B cell (primary cell): ENCODE measurements at regions of chr4 and their contacts with region 1.

Region 1: GRCh38 chr4:174365018-174365587 is 81.4 kb downstream of the CEP44 start:
- DNase-seq: peak; percentile 12
- ATAC-seq: no peak
- H3K4me3 ChIP-seq: no peak overlapping the region
- H3K4me3 Mint-ChIP-seq: no peak overlapping the region
- H3K27ac ChIP-seq: no peak overlapping the region
- H3K27ac Mint-ChIP-seq: no peak overlapping the region
- H3K4me1 ChIP-seq: no peaks in the 10 kb centered on the region
- H3K4me1 Mint-ChIP-seq: no peaks in the 10 kb centered on the region
- H3K27me3 ChIP-seq: no peaks in the 10 kb centered on the region
- H3K27me3 Mint-ChIP-seq: no peaks in the 10 kb centered on the region
- CTCF ChIP-seq: peak; percentile 70

Region 2: DNA sequence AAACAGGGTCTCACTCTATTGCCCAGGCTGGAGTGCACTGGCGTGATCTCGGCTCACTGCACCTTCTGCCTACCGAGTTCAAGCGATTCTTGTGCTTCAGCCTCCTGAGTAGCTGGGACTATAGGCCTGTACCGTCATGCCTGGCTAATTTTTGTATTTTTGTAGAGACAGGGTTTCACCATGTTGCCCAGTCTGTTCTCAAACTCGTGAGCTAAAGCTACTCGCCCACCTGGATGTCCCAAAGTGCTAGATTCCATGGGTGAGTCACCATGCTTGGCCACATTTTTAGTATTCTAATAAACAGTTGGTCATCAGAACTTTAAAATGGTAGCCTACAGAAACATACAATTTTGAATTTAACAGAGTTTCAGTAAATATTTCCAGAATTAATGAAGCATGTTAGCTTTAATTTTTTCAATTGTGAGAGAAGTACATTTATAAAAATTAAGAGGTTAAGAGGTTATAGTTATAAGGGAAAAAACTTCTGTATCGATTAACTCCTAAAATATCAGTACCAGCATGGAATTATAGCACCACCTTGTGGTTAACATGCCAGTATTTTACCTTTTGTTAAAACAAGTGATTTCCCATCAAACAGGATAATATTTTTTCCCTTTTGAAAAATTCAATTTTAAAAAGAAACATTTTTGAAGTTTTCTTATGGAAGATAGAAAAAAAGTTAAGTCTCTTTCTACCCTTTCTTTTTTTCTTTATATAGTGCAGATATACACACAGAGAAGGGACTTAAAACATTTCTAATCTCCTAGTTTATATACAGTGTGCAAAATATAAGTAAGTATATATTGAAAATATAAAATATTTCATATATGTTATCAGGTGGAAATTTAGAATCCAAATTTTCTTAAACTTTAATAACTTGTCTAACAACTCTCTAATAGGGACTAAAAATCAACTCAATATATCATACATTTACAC is 46.0 kb before region 1 on chr4:
- CTCF ChIA-PET with region 1: no interaction called
- POLR2A ChIA-PET with region 1: no interaction called
- intact Hi-C with region 1: no loop called
- DNase-seq: peak; percentile 38
- ATAC-seq: no peak
- H3K4me3 ChIP-seq: no peak overlapping the region
- H3K4me3 Mint-ChIP-seq: no peak overlapping the region
- H3K27ac ChIP-seq: no peak overlapping the region
- H3K27ac Mint-ChIP-seq: no peak overlapping the region
- H3K4me1 ChIP-seq: no peaks in the 10 kb centered on the region
- H3K4me1 Mint-ChIP-seq: no peaks in the 10 kb centered on the region
- H3K27me3 ChIP-seq: no peaks in the 10 kb centered on the region
- H3K27me3 Mint-ChIP-seq: no peaks in the 10 kb centered on the region
- CTCF ChIP-seq: peak; percentile 83

Region 3: GRCh38 chr4:174631901-174632758 is 267.0 kb after region 1 on chr4:
- CTCF ChIA-PET with region 1: no interaction called
- POLR2A ChIA-PET with region 1: no interaction called
- intact Hi-C with region 1: loop called (anchors 2 kb)
- DNase-seq: peak; percentile 5
- ATAC-seq: no peak
- H3K4me3 ChIP-seq: no peak overlapping the region
- H3K4me3 Mint-ChIP-seq: no peak overlapping the region
- H3K27ac ChIP-seq: no peak overlapping the region
- H3K27ac Mint-ChIP-seq: no peak overlapping the region
- H3K4me1 ChIP-seq: no peaks in the 10 kb centered on the region
- H3K4me1 Mint-ChIP-seq: no peaks in the 10 kb centered on the region
- H3K27me3 ChIP-seq: no peaks in the 10 kb centered on the region
- H3K27me3 Mint-ChIP-seq: peaks cover 5% of the 10 kb centered on the region
- CTCF ChIP-seq: peak; percentile 37

Region 4: DNA sequence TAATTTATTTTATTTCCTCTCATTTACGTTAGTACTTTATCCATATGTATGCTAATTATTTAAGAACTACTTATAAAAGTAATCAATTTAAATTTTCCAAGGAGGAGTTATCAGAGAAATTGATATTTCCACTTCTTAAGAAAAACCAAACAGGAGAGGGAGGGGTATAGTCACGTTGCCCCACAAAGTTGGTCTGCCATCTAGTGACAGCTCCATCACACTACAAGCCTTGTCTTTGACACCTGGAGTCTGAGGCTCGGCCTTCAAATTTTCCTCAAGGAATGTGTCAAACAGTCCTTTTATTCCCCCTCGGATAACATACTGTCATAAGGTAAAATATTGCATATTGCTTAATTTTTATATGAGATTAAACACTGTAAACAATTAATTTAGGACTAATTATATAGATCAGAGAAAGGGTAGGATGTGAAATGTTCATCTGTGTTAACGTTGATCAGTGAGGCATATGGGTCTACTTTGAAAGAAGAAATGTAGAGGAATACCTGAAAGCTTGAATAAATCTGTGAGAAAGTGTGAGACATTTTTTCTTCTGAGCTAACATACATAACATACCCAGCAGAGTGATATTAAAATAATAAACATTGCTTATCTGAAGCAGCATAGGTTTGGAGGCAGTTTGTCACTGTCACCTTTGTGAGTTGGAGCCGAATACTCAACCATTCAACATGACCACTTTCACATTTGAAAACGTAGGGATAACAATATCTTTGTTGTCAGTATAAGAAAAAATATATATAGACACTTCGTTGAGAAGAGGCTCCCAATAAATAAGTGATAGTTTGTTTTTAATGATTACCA is 349.5 kb after region 1 on chr4:
- CTCF ChIA-PET with region 1: no interaction called
- POLR2A ChIA-PET with region 1: no interaction called
- intact Hi-C with region 1: loop called (anchors 5 kb)
- DNase-seq: peak; percentile 5
- ATAC-seq: no peak
- H3K4me3 ChIP-seq: no peak overlapping the region
- H3K4me3 Mint-ChIP-seq: no peak overlapping the region
- H3K27ac ChIP-seq: no peak overlapping the region
- H3K27ac Mint-ChIP-seq: no peak overlapping the region
- H3K4me1 ChIP-seq: no peaks in the 10 kb centered on the region
- H3K4me1 Mint-ChIP-seq: no peaks in the 10 kb centered on the region
- H3K27me3 ChIP-seq: no peaks in the 10 kb centered on the region
- H3K27me3 Mint-ChIP-seq: no peaks in the 10 kb centered on the region
- CTCF ChIP-seq: peak; percentile 71

Region 5: GRCh38 chr4:175891851-175892250 is 1526.7 kb after region 1 on chr4:
- CTCF ChIA-PET with region 1: no interaction called
- POLR2A ChIA-PET with region 1: no interaction called
- intact Hi-C with region 1: loop called (anchors 5 kb)
- DNase-seq: peak; percentile 5
- ATAC-seq: no peak
- H3K4me3 ChIP-seq: no peak overlapping the region
- H3K4me3 Mint-ChIP-seq: no peak overlapping the region
- H3K27ac ChIP-seq: no peak overlapping the region
- H3K27ac Mint-ChIP-seq: no peak overlapping the region
- H3K4me1 ChIP-seq: no peaks in the 10 kb centered on the region
- H3K4me1 Mint-ChIP-seq: no peaks in the 10 kb centered on the region
- H3K27me3 ChIP-seq: no peaks in the 10 kb centered on the region
- H3K27me3 Mint-ChIP-seq: no peaks in the 10 kb centered on the region
- CTCF ChIP-seq: no peak